ENCODE measurements at regions of chrX and their contacts with region 1.

Region 1: DNA sequence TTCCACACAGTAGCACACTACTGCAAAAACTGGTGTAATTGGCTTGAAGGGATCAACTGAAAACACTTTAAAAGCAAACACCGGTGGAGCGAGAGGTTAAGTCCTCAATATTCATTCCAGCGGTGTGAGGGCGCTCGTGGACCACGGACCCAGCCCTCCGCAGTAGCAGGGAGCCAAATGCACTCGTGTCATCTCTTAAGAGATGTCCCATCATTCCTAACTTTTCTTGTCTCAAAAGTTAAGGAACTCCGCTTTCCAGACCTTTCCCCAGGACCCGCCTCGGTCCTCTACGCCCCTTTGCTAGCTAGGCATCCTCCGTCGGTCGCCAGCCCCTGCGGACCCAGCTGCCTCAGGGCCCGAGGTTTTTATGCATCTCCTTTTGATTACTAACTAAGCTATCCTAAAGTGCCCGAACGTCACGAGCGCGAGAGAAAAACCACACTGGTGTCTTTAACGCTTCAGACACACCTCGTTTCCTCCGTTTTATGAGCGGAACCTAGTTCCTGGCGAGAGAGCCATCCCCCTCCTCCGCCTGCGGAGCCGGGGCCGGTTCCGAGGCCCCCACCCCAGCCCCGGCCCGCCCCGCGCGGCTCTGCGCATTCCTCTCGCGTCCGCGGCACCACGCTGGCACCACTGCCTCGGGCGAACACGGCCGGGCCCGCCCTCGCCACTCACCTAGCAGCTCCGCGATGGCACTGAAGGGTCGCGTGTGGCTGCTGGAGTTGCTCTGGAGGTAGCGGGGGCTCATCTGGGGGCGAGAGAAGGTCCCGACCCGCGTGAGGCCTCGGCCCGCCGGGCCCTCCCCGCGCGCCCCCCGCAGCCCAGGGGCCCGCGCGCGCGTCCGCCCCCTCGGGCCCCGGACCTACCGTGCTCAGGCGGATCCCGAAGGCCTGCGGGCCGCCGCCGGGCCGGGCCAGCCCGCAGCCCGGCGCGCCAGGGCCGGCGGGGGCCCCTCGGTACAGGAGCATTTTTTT is 723 bp downstream of the MORC4 start:
- DNase-seq: peak; percentile 48
- H3K4me3 ChIP-seq: peak overlapping the region; percentile 47 to 50
- H3K27ac ChIP-seq: peak overlapping the region; percentile 63 to 70
- H3K4me1 ChIP-seq: no peaks in the 10 kb centered on the region
- H3K27me3 ChIP-seq: no peaks in the 10 kb centered on the region
- CTCF ChIP-seq: peak in 3 of 4 experiments; percentile 28 to 43 (median 41)
- POLR2A ChIP-seq: no peak

Region 2: DNA sequence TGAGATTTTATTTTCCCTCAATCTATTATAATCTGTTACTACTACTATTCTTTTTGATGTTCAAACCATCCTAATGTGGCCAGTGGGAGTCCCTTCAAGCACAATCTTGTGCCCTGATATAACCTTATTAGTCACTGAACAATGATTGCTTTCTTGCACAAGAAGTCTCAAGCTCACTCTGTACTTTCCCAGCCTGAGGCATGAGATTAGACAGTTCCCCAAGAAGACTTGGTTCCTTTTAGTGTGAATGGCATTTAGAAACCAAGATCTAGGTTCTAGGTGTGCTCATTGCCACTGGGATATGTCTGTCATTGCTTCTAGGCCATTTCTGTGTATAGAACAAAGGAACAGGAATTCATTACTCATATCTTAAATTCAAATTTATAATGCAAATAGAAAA is 147.4 kb after region 1 on chrX:
- intact Hi-C with region 1: no loop called
- DNase-seq: no peak
- H3K4me3 ChIP-seq: no peak overlapping the region
- H3K27ac ChIP-seq: no peak overlapping the region
- H3K4me1 ChIP-seq: no peaks in the 10 kb centered on the region
- H3K27me3 ChIP-seq: no peaks in the 10 kb centered on the region
- CTCF ChIP-seq: no peak
- POLR2A ChIP-seq: no peak

Region 3: DNA sequence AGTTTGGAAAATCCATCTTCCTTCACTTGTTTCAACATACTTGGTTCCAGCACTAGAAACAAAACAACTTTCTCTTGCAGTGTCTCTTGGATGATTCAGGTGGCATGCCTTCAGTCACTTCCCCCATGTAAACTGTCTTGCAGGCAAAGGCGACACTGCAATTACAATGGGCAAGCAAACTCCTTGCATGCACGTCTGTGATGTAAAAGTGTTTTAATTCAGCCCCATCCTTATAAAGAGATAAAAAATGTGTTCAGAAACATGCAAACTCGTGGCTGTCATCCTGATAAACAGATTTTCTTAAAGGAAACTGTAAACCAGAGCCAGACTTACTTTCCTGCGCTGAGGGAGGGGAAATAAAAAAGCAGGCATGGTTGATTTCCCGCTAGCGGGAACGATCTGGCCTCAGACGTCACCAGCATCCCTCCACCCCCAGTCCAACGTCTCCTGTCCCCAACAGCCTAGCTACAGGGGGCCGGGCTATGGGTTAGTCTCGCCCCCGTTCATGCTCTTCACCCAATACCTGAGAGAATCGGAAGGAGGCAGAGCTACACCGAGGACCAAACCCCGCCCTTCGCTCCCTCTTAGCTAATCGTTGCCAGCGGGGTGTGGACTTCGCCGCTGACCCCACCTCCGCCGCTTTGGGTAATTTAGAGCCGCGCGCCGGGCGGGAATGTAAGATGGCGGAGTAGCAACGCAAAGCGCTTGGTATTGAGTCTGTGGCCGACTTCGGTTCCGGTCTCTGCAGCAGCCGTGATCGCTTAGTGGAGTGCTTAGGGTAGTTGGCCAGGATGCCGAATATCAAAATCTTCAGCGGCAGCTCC is 628.8 kb after region 1 on chrX and contains the start of gene PRPS1:
- intact Hi-C with region 1: loop called (anchors 10 kb)
- DNase-seq: peak; percentile 90
- H3K4me3 ChIP-seq: peak within 1 kb of the TSS; percentile 40 to 42
- H3K27ac ChIP-seq: peak within 1 kb of the TSS; percentile 51 to 69
- H3K4me1 ChIP-seq: no peaks in the 10 kb centered on the region
- H3K27me3 ChIP-seq: no peaks in the 10 kb centered on the region
- CTCF ChIP-seq: no peak
- POLR2A ChIP-seq: peak; percentile 57
- total RNA-seq, gene PRPS1: 37.5 to 37.6 TPM

Measured in prostate gland (tissue), 2 donors.